Ovary (tissue), 10 donors: ENCODE measurements at regions of chr9 and their contacts with region 1.

Region 1: GRCh38 chr9:2359821-2360505 is 261.6 kb upstream of the VLDLR start:
- DNase-seq: no peak
- H3K4me3 ChIP-seq: no peak overlapping the region
- H3K27ac ChIP-seq: no peak overlapping the region
- H3K4me1 ChIP-seq: peaks cover 3% of the 10 kb centered on the region
- H3K27me3 ChIP-seq: no peaks in the 10 kb centered on the region
- CTCF ChIP-seq: no peak
- EP300 ChIP-seq: no peak
- POLR2A ChIP-seq: no peak

Region 2: GRCh38 chr9:1673300-1673699 is 686.7 kb before region 1 on chr9:
- intact Hi-C with region 1: no loop called
- DNase-seq: no peak
- H3K4me3 ChIP-seq: no peak overlapping the region
- H3K27ac ChIP-seq: no peak overlapping the region
- H3K4me1 ChIP-seq: no peaks in the 10 kb centered on the region
- H3K27me3 ChIP-seq: no peaks in the 10 kb centered on the region
- CTCF ChIP-seq: no peak
- EP300 ChIP-seq: no peak
- POLR2A ChIP-seq: no peak

Region 3: GRCh38 chr9:2570615-2571479 is 210.9 kb after region 1 on chr9:
- intact Hi-C with region 1: loop called in 1 of 4 experiments (anchors 5 kb)
- DNase-seq: peak; percentile 72 to 88 (median 84)
- H3K4me3 ChIP-seq: no peak overlapping the region
- H3K27ac ChIP-seq: peak overlapping the region in 1 of 2 donors; percentile 71
- H3K4me1 ChIP-seq: peaks cover 21% of the 10 kb centered on the region
- H3K27me3 ChIP-seq: no peaks in the 10 kb centered on the region
- CTCF ChIP-seq: no peak
- EP300 ChIP-seq: no peak
- POLR2A ChIP-seq: no peak